Ascending aorta (tissue), 2 donors: ENCODE measurements at regions of chr17 and their contacts with region 1.

Region 1: DNA sequence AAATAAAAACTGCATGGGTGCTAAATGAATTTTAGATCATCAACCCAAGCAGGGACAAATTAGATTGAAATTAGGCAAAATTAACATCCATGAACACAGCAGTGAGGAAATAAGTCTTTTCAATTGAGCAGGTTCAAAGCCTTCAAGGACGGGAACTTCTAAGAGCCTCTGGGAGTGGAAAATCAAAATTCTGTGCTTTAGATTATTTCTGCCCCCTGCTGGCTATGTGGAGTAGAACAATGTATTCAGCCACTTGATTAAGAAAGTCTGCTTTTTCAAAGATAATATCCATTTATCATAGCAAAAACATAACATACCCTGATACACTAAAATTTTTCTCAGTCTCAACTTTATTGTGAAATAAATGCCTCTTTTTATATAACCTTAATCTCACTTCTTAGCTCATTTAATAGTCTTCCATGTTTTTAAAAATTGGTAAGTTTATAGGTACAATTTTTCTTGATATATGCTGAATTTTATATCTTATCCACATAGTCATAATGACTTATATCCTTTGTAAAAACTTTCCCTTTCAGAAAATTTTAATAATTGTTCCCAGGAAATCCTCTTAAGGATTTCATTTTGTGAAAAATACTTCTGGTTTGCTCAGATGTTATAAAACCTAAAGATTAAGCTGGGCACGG is 28.1 kb upstream of the NOL11 start:
- DNase-seq: peak in 1 of 2 donors; percentile 66
- H3K4me3 ChIP-seq: no peak overlapping the region
- H3K27ac ChIP-seq: no peak overlapping the region
- H3K4me1 ChIP-seq: no peaks in the 10 kb centered on the region
- H3K27me3 ChIP-seq: no peaks in the 10 kb centered on the region
- CTCF ChIP-seq: peak; percentile 63 to 71 (median 66)

Region 2: DNA sequence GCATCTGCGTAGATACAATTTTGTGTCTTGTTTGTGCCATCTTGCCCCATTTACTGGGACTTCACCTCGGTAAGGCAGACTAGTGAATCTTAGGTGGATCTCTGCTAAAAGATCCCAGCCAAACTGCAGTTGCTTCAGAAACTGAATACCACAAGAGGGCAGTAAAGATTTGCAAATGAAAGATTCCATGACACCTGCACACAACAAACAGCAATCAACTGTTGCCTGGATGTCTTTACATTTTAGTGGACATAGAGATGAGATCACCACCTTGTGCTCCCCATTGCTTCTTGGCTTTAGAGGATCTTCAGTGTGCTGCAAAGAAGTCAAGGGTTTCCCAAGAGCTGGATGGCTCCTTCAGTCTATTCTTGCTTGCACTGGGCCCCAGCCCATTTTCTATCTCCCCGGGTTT is 973.9 kb before region 1 on chr17:
- intact Hi-C with region 1: loop called (anchors 5 kb)
- DNase-seq: no peak
- H3K4me3 ChIP-seq: no peak overlapping the region
- H3K27ac ChIP-seq: no peak overlapping the region
- H3K4me1 ChIP-seq: no peaks in the 10 kb centered on the region
- H3K27me3 ChIP-seq: no peaks in the 10 kb centered on the region
- CTCF ChIP-seq: peak; percentile 52 to 67 (median 65)

Region 3: GRCh38 chr17:67559377-67559966 is 130.2 kb before region 1 on chr17:
- intact Hi-C with region 1: no loop called
- DNase-seq: no peak
- H3K4me3 ChIP-seq: no peak overlapping the region
- H3K27ac ChIP-seq: no peak overlapping the region
- H3K4me1 ChIP-seq: no peaks in the 10 kb centered on the region
- H3K27me3 ChIP-seq: no peaks in the 10 kb centered on the region
- CTCF ChIP-seq: no peak